Transverse colon (tissue), 4 donors: ENCODE measurements at regions of chrX and their contacts with region 1.

Region 1: DNA sequence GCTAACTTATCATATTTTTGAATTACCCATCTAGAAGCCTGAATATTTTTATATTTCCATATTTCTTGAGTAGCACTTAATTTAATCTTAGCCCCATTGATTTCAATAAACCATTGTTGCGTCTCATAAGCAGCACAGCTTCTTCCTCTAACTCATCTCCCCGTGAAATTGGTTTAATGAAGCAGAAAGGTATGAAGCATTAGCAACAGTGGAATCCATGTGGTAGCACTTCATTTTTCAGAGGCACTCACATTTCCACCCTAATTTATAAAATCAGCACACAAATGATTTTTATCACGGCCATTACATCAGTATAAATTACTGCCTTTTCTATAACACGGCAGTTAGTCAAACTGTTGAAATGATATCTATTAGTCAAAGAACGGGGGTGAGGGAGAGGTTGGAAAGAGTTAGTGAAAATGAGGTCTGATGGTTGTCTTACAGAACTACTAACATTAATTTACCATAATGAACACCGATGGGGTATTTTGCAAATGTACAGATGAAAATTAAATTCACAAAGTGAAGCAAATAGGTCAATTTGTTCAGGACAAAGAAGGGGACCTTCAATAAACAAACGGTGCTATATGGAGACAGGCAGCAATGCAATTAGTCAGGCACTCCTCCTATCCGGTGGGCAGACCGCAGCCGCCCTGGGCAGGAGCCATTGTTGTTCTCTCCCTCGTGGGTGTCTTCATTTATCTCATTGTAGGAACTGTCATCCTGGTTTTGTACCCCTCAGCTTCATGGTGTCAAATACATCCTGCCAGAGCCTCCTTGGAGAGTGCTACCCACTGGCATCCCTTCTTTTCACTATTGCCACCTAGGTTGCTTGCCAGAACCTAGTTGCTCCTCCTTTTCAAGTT is 205.7 kb downstream of the SOX3 start:
- DNase-seq: no peak
- H3K4me3 ChIP-seq: no peak overlapping the region
- H3K27ac ChIP-seq: no peak overlapping the region
- H3K4me1 ChIP-seq: no peaks in the 10 kb centered on the region
- H3K27me3 ChIP-seq: no peaks in the 10 kb centered on the region
- CTCF ChIP-seq: no peak
- EP300 ChIP-seq: no peak
- POLR2A ChIP-seq: no peak

Region 2: GRCh38 chrX:139647597-139647996 is 651.6 kb before region 1 on chrX:
- in situ Hi-C with region 1: no loop called
- intact Hi-C with region 1: loop called (anchors 5 kb)
- DNase-seq: no peak
- H3K4me3 ChIP-seq: no peak overlapping the region
- H3K27ac ChIP-seq: no peak overlapping the region
- H3K4me1 ChIP-seq: no peaks in the 10 kb centered on the region
- H3K27me3 ChIP-seq: no peaks in the 10 kb centered on the region
- CTCF ChIP-seq: no peak
- EP300 ChIP-seq: no peak
- POLR2A ChIP-seq: no peak

Region 3: DNA sequence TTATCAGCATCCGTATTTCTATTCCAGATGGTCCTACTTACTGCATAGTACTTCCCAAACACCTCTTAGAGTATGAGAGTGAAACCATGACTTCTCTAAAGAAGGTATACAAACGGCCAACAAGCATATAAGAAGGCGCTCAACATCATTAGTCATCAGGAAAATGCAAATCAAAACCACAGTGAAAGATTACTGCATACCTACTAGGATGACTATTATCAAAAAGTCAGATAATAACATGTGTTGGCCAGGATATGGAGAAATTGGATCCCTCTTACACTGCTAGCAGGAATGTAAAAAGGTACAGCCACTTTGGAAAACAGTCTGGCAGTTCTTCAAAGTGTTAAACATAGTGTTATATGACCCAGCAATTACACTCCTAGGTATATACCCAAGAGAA is 118.6 kb before region 1 on chrX:
- in situ Hi-C with region 1: no loop called
- intact Hi-C with region 1: no loop called
- DNase-seq: no peak
- H3K4me3 ChIP-seq: no peak overlapping the region
- H3K27ac ChIP-seq: no peak overlapping the region
- H3K4me1 ChIP-seq: no peaks in the 10 kb centered on the region
- H3K27me3 ChIP-seq: no peaks in the 10 kb centered on the region
- CTCF ChIP-seq: no peak
- EP300 ChIP-seq: no peak
- POLR2A ChIP-seq: no peak